PC-3 (cell line): ENCODE measurements at regions of chr3 and their contacts with region 1.

Region 1: GRCh38 chr3:113287803-113288648 is 76.7 kb downstream of the BOC start:
- DNase-seq: peak; percentile 85
- ATAC-seq: peak; percentile 69
- H3K4me3 ChIP-seq: peak overlapping the region; percentile 39
- H3K27ac ChIP-seq: peak overlapping the region; percentile 86
- H3K4me1 ChIP-seq: peaks cover 18% of the 10 kb centered on the region
- H3K27me3 ChIP-seq: no peaks in the 10 kb centered on the region
- CTCF ChIP-seq: peak; percentile 97

Region 2: GRCh38 chr3:113051302-113051711 is 236.7 kb before region 1 on chr3:
- CTCF ChIA-PET with region 1: interaction called, 4 read pairs
- POLR2A ChIA-PET with region 1: no interaction called
- intact Hi-C with region 1: loop called (anchors 1 kb)
- DNase-seq: peak; percentile 97
- ATAC-seq: peak; percentile 95
- H3K4me3 ChIP-seq: peak overlapping the region; percentile 39
- H3K27ac ChIP-seq: no peak overlapping the region
- H3K4me1 ChIP-seq: peaks cover 4% of the 10 kb centered on the region
- H3K27me3 ChIP-seq: no peaks in the 10 kb centered on the region
- CTCF ChIP-seq: peak; percentile 95

Region 3: DNA sequence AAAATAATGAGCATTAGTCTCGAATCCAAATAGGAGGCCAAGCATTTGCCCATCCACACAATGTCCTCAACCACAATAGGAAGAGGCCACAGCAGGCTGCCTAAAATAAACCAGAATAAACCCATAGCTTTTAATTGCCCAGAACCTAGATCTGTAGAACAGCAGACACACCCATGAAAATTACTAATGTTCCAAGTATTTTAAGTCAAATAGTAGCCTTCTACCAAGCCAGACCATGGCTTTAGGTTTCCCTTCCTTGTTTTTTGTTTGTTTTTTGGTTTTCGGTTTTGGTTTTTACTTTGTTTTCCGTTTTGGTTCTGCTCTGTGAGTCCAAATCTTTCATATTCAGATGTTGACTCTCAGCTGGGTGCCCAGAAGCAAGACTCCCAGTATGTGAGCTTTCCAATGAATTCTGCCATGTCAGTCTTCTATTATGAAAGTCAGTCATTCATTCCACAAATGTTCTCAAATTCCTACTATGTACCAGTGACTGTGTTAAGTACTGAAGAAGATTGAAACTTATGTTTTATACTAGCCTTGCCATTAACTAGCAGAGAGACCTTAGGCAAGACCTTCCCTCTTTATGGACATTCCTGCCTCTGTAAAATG is 134.4 kb before region 1 on chr3:
- CTCF ChIA-PET with region 1: no interaction called
- POLR2A ChIA-PET with region 1: no interaction called
- intact Hi-C with region 1: loop called (anchors 1 kb)
- DNase-seq: peak; percentile 67
- ATAC-seq: peak; percentile 97
- H3K4me3 ChIP-seq: peak overlapping the region; percentile 34
- H3K27ac ChIP-seq: peak overlapping the region; percentile 25; the same call in 1 of the 2 replicates
- H3K4me1 ChIP-seq: peaks cover 18% of the 10 kb centered on the region
- H3K27me3 ChIP-seq: no peaks in the 10 kb centered on the region
- CTCF ChIP-seq: no peak

Region 4: DNA sequence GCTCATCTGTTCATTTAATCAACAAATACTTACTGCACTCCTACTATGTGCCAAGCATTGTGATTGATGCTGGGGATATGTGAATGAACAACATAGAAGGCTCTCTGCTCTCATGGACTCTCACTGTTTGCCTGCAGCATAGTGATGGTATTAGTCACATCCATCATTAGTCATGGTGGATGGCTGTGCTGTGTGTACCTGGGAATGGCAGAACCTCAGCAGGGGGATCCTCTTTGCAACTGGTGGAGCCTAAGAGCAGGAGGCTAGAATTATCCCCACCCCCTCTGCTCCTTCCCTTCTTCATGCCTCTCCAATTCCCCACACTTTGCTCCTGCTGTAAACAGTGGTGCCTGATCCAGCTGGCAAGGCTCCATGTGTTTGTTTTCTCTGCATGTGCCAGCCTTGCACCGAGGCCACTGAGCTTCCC is 56.2 kb before region 1 on chr3:
- CTCF ChIA-PET with region 1: no interaction called
- POLR2A ChIA-PET with region 1: no interaction called
- intact Hi-C with region 1: loop called (anchors 1 kb)
- DNase-seq: peak; percentile 95
- ATAC-seq: peak; percentile 99
- H3K4me3 ChIP-seq: no peak overlapping the region
- H3K27ac ChIP-seq: peak overlapping the region; percentile 93
- H3K4me1 ChIP-seq: peaks cover 26% of the 10 kb centered on the region
- H3K27me3 ChIP-seq: no peaks in the 10 kb centered on the region
- CTCF ChIP-seq: no peak